SK-N-SH (cell line): ENCODE measurements at regions of chr7 and their contacts with region 1.

Region 1: GRCh38 chr7:43721193-43721806 is 8.0 kb downstream of the COA1 start:
- DNase-seq: peak; percentile 45
- H3K4me3 ChIP-seq: no peak overlapping the region; a peak in 1 of 4 replicates
- H3K27ac ChIP-seq: no peak overlapping the region; a peak in 1 of 4 replicates
- H3K4me1 ChIP-seq: no peaks in the 10 kb centered on the region; a peak in 1 of 4 replicates
- H3K27me3 ChIP-seq: no peaks in the 10 kb centered on the region
- CTCF ChIP-seq: peak; percentile 99
- EP300 ChIP-seq: no peak
- RAD21 ChIP-seq: peak; percentile 79

Region 2: DNA sequence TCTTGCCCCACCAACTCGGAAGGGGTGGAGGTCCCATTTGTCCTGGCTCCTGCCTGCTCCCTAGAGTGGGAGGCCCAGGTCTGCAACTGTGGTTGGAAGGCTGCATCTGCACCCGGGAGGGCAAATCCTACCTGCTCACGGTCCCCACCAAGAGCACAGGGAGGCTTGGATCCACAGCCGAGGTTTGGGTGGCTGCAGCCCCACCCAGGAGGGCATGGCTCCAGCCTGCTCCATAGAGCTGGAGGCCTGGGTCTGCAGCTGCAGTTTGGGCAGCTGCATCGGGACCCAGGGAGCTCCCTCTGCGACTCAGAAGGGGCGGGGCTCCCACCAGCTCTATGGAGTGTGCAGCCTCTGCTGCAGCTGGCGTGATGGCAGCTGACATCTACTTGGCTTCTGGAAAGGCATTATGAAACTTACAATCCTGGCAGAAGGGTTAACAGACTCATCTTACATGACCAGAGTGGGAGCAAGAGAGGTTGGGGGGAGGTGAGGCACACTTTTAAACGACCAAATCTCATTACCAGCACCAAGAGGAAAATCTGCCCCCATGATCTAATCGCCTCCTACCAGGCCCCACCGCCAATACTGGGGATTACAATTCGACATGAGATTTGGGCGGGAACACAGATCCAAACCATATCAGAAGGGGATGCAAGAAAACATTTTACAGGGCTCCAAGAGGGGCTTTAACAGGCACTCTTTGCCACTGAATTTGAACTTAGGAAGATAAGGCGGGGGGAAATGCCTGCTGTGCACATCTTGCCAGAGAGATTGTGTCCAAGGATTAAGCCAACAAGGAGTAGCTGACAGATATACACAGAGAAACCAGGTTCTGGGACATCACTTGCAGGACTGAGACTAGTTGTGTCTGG is 29.0 kb after region 1 on chr7:
- CTCF ChIA-PET with region 1: interaction called, 10 read pairs
- POLR2A ChIA-PET with region 1: no interaction called
- DNase-seq: no peak
- H3K4me3 ChIP-seq: no peak overlapping the region
- H3K27ac ChIP-seq: no peak overlapping the region
- H3K4me1 ChIP-seq: peaks cover 0 to 3% of the 10 kb centered on the region in 2 experiments; a peak in 1 of 4 replicates
- H3K27me3 ChIP-seq: peaks cover 11% of the 10 kb centered on the region; the same call in 1 of the 2 replicates
- CTCF ChIP-seq: no peak
- EP300 ChIP-seq: no peak
- RAD21 ChIP-seq: no peak

Region 3: DNA sequence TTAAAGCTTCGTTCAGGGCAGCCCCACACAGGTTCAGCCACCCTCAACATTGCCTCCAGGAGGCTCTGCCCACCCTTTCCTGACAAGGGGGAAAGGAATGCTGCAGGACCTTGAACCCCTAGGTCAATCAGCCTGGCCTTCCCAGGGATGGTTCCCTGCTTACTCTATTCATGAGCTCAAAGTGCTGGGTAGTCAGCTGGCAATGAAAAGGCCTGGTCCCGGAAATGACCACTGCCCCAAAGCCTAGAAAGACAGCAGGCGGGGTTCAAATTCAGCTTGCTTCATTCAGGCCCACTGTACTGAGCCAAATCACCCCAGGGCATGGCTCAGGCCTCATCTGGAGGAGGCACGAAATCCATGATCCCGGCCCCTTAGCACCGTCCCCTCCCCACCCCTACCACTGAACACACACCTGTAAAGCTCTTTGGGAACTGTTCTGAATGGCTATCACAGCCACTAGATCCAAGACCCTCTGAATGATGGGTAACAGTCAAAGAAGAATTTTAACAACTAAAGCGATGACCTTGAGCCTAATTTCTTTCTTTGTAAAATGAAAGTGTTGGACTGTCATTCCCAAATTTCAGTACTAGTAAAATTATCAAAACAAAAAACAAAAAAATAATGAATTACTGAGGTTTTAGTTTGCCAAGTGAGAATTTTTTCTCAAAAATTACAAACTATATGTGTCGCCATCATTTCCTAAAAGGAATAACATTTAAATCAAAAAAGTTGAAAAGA is 184.1 kb after region 1 on chr7:
- CTCF ChIA-PET with region 1: no interaction called
- POLR2A ChIA-PET with region 1: no interaction called
- DNase-seq: peak; percentile 72
- H3K4me3 ChIP-seq: peak overlapping the region; percentile 65 to 80
- H3K27ac ChIP-seq: peak overlapping the region; percentile 34 to 81; a peak in 3 of 4 replicates
- H3K4me1 ChIP-seq: peaks cover 4 to 23% of the 10 kb centered on the region in 2 experiments; a peak in 2 of 4 replicates
- H3K27me3 ChIP-seq: no peaks in the 10 kb centered on the region
- CTCF ChIP-seq: no peak
- EP300 ChIP-seq: no peak
- RAD21 ChIP-seq: no peak